B cell (primary cell): ENCODE measurements at regions of chr11 and their contacts with region 1.

Region 1: GRCh38 chr11:67382276-67383136 is 9.1 kb upstream of the CLCF1 start:
- DNase-seq: peak; percentile 88
- ATAC-seq: peak; percentile 86
- H3K4me3 ChIP-seq: no peak overlapping the region
- H3K4me3 Mint-ChIP-seq: peak overlapping the region; percentile 84
- H3K27ac ChIP-seq: peak overlapping the region in 1 of 2 donors; percentile 88
- H3K27ac Mint-ChIP-seq: peak overlapping the region; percentile 92
- H3K4me1 ChIP-seq: peaks cover 22 to 33% of the 10 kb centered on the region in 2 donors
- H3K4me1 Mint-ChIP-seq: peaks cover 22% of the 10 kb centered on the region
- H3K27me3 ChIP-seq: no peaks in the 10 kb centered on the region
- H3K27me3 Mint-ChIP-seq: no peaks in the 10 kb centered on the region
- CTCF ChIP-seq: peak; percentile 96

Region 2: GRCh38 chr11:67322710-67323109 is 59.8 kb before region 1 on chr11:
- CTCF ChIA-PET with region 1: interaction called, 71 read pairs
- POLR2A ChIA-PET with region 1: interaction called, 6 read pairs
- intact Hi-C with region 1: loop called (anchors 1 kb)
- DNase-seq: no peak
- ATAC-seq: no peak
- H3K4me3 ChIP-seq: no peak overlapping the region
- H3K4me3 Mint-ChIP-seq: no peak overlapping the region
- H3K27ac ChIP-seq: no peak overlapping the region
- H3K27ac Mint-ChIP-seq: no peak overlapping the region
- H3K4me1 ChIP-seq: peaks cover 11 to 12% of the 10 kb centered on the region in 2 donors
- H3K4me1 Mint-ChIP-seq: peaks cover 6% of the 10 kb centered on the region
- H3K27me3 ChIP-seq: no peaks in the 10 kb centered on the region
- H3K27me3 Mint-ChIP-seq: no peaks in the 10 kb centered on the region
- CTCF ChIP-seq: no peak

Region 3: GRCh38 chr11:67452141-67452952 is 69.8 kb after region 1 on chr11 and contains the start of gene GPR152:
- CTCF ChIA-PET with region 1: no interaction called
- POLR2A ChIA-PET with region 1: no interaction called
- intact Hi-C with region 1: no loop called
- DNase-seq: no peak
- ATAC-seq: no peak
- H3K4me3 ChIP-seq: no peak within 1 kb of the TSS
- H3K4me3 Mint-ChIP-seq: no peak within 1 kb of the TSS
- H3K27ac ChIP-seq: no peak within 1 kb of the TSS
- H3K27ac Mint-ChIP-seq: peak within 1 kb of the TSS; percentile 81
- H3K4me1 ChIP-seq: peaks cover 48 to 86% of the 10 kb centered on the region in 2 donors
- H3K4me1 Mint-ChIP-seq: peaks cover 44% of the 10 kb centered on the region
- H3K27me3 ChIP-seq: no peaks in the 10 kb centered on the region
- H3K27me3 Mint-ChIP-seq: no peaks in the 10 kb centered on the region
- CTCF ChIP-seq: no peak
- total RNA-seq, gene GPR152: not detected in 2 replicates